ENCODE measurements at regions of chr1 and their contacts with region 1.

Region 1: GRCh38 chr1:27643701-27644625 is 9.0 kb upstream of the FGR start:
- DNase-seq: peak in 1 of 2 experiments; percentile 83
- H3K4me3 ChIP-seq: no peak overlapping the region
- H3K27ac ChIP-seq: no peak overlapping the region
- H3K4me1 ChIP-seq: peaks cover 0 to 5% (median 1%) of the 10 kb centered on the region in 4 experiments; a peak in 4 of 7 replicates
- H3K27me3 ChIP-seq: no peaks in the 10 kb centered on the region
- CTCF ChIP-seq: peak; percentile 72 to 92 (median 80)
- EP300 ChIP-seq: no peak
- POLR2A ChIP-seq: no peak
- RAD21 ChIP-seq: peak; percentile 57 to 68

Region 2: DNA sequence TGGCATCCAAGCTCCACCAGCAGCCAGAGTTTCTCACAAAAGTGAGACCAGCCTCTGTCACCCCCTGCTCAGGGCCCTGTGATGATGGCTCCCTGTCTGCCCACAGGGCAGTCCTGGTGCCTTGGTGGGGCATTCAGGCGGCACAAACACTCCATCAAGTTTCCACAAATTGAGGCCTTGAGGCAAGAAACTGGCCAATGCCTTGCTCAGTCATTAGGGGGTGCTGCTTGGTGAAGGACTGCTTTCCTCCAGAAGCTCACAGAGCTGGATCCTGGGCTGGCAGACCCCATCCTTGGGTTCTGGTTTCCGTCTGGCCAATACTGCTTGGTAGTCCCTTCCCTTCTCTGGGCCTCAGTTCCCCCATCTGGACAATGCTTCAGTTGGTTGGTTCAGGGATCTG is 27.5 kb before region 1 on chr1:
- CTCF ChIA-PET with region 1: interaction called, 20 read pairs
- POLR2A ChIA-PET with region 1: interaction called, 3 read pairs
- DNase-seq: no peak
- H3K4me3 ChIP-seq: no peak overlapping the region
- H3K27ac ChIP-seq: no peak overlapping the region
- H3K4me1 ChIP-seq: peaks cover 0 to 17% (median 9%) of the 10 kb centered on the region in 4 experiments; a peak in 6 of 7 replicates
- H3K27me3 ChIP-seq: peaks cover 0 to 11% (median 6%) of the 10 kb centered on the region in 4 experiments; a peak in 2 of 7 replicates
- CTCF ChIP-seq: peak; percentile 55 to 76 (median 63)
- EP300 ChIP-seq: no peak
- POLR2A ChIP-seq: no peak
- RAD21 ChIP-seq: peak; percentile 39 to 57

Region 3: DNA sequence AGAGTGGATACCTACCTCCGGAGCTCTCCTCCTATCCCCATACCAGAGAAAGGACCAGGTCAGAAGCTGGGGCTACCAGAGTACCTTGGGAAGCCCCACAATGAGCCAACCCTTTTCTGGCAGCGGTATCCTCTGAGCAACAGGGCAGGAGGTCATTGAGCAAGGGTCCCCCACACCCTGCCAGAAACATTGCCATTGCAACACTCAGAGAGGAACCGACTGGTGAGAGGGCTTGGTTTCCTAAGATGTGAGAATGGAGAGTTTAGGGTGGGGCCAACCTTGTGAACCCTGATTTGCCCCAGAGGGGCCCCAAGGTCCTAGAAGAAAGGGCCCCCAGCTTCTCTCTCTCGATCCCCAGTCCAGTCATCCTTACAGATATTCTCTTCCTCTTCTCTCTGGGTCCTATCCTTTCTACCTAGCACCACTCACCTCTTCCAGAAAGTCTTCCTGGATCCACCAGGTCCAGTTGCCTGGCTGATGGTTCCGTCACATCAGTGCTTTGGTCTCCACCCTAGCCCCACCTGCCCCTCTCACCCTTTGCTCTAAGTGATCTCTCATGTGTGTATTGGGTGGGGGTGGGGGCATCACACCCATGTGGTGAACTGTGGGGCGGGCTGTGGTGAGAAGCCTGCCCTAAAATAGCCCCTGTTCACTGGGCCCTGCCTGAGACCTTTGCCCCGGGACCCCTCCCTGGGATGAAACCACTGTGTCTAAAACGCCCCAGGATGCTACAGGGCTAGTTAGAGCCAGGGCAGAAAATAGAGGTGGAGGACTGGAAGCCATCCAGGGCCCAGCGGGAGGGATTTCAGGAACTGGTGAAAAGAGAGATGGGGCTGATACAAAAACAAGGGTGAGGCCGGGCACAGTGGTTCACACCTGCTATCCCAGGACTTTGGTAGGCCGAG is 17.7 kb before region 1 on chr1:
- CTCF ChIA-PET with region 1: interaction called, 20 read pairs
- POLR2A ChIA-PET with region 1: interaction called, 3 read pairs
- DNase-seq: no peak
- H3K4me3 ChIP-seq: no peak overlapping the region
- H3K27ac ChIP-seq: no peak overlapping the region
- H3K4me1 ChIP-seq: peaks cover 2 to 21% (median 8%) of the 10 kb centered on the region in 4 experiments
- H3K27me3 ChIP-seq: no peaks in the 10 kb centered on the region
- CTCF ChIP-seq: no peak
- EP300 ChIP-seq: no peak
- POLR2A ChIP-seq: no peak
- RAD21 ChIP-seq: no peak

Region 4: GRCh38 chr1:27656157-27656893 is 12.4 kb after region 1 on chr1:
- CTCF ChIA-PET with region 1: interaction called, 29 read pairs
- POLR2A ChIA-PET with region 1: interaction called, 4 read pairs
- DNase-seq: peak; percentile 74 to 77
- H3K4me3 ChIP-seq: no peak overlapping the region
- H3K27ac ChIP-seq: no peak overlapping the region
- H3K4me1 ChIP-seq: peaks cover 6 to 21% (median 17%) of the 10 kb centered on the region in 4 experiments
- H3K27me3 ChIP-seq: peaks cover 0 to 2% (median 0%) of the 10 kb centered on the region in 4 experiments; a peak in 2 of 7 replicates
- CTCF ChIP-seq: peak in 2 of 3 experiments; percentile 21 to 41; a peak in 3 of 4 replicates
- EP300 ChIP-seq: peak in 1 of 2 experiments; percentile 76; a peak in 1 of 3 replicates
- POLR2A ChIP-seq: no peak
- RAD21 ChIP-seq: peak in 1 of 2 experiments; percentile 39; a peak in 2 of 4 replicates

Region 5: DNA sequence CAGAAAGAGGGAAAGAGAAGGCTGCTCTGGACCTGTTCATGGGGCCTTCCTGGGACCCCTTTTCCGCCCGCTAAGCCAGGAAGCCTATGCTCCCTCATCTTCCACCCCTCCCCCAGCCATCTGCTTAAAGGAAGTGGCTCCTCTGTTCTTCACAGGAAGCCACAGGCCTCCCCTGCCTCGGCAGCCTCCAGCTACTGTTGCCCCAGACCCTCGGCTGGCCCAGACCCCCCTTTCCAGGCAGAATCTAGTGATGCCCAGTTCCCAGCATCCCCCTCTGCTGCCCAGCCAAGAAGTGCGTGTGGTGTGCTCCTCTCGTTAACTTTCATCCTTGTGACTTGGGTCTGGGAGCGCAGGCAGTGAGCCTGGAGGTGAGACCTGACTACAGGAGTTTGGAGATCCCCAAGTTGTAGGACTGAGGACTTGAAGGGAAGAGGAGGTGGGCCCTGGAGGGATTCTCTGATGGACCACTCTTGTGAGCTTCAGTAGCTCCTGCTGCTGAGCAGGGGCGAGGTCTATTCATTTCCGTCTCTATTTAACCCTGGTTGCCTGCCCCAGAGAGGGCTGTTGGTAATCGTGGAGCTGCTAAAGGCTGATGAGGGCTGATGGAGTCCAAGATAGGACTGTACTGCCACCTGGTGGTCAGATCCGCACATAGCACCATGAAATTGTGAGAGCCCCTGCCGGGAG is 18.9 kb after region 1 on chr1:
- CTCF ChIA-PET with region 1: interaction called, 29 read pairs
- POLR2A ChIA-PET with region 1: no interaction called
- DNase-seq: peak; percentile 78 to 99
- H3K4me3 ChIP-seq: no peak overlapping the region
- H3K27ac ChIP-seq: 0 out of 2 replicates have a peak overlapping the region, but pooled peaks have one; percentile 5
- H3K4me1 ChIP-seq: peaks cover 4 to 20% (median 13%) of the 10 kb centered on the region in 4 experiments; a peak in 6 of 7 replicates
- H3K27me3 ChIP-seq: peaks cover 0 to 2% (median 0%) of the 10 kb centered on the region in 4 experiments; a peak in 2 of 7 replicates
- CTCF ChIP-seq: peak; percentile 74 to 91 (median 88)
- EP300 ChIP-seq: no peak
- POLR2A ChIP-seq: no peak
- RAD21 ChIP-seq: peak; percentile 94

Measured in H1 (cell line).